Body of pancreas (tissue), 4 donors: ENCODE measurements at regions of chr11 and their contacts with region 1.

Region 1: DNA sequence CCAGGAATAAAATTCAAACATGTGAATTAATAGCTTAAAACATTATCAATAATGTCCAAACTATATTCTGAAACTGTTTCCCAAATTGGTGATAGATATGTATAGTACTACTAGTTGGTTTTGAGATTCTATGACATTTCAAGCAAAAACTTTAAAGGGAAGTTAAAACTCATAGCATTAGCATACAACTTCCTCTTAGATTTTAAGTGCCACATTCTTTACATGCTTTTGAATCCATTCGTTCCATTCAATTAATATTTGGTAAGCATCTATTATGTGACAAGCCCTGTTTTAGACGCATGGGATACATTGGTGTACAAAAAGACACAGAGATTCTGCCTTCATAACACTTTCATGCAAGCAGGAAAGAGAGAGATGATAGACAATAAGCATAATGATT is 8.9 kb downstream of the PATL1 start:
- DNase-seq: no peak
- ATAC-seq: no peak
- H3K4me3 ChIP-seq: no peak overlapping the region
- H3K27ac ChIP-seq: no peak overlapping the region
- H3K4me1 ChIP-seq: no peaks in the 10 kb centered on the region
- H3K27me3 ChIP-seq: no peaks in the 10 kb centered on the region
- CTCF ChIP-seq: no peak
- POLR2A ChIP-seq: no peak

Region 2: GRCh38 chr11:59601788-59602187 is 58.2 kb before region 1 on chr11:
- intact Hi-C with region 1: loop called (anchors 10 kb)
- DNase-seq: peak; percentile 29 to 61 (median 34)
- ATAC-seq: peak; percentile 91
- H3K4me3 ChIP-seq: no peak overlapping the region
- H3K27ac ChIP-seq: peak overlapping the region; percentile 59 to 85 (median 72)
- H3K4me1 ChIP-seq: peaks cover 39% of the 10 kb centered on the region
- H3K27me3 ChIP-seq: no peaks in the 10 kb centered on the region
- CTCF ChIP-seq: no peak
- POLR2A ChIP-seq: no peak